Activated CD8-positive, alpha-beta memory T cell treated with anti-CD3 and anti-CD28 coated beads, Interleukin-2, amount 10 ng/mL, durations not matched to agents 7 days and 5 days (primary cell): ENCODE measurements at regions of chr2 and their contacts with region 1.

Region 1: GRCh38 chr2:174341286-174341994 is 6.7 kb downstream of the SP9 start:
- DNase-seq: peak; percentile 90
- ATAC-seq: peak; percentile 68
- H3K4me3 Mint-ChIP-seq: peak overlapping the region; percentile 59
- H3K27ac Mint-ChIP-seq: peak overlapping the region; percentile 84
- H3K4me1 Mint-ChIP-seq: peaks cover 41% of the 10 kb centered on the region
- H3K27me3 Mint-ChIP-seq: peaks cover 78% of the 10 kb centered on the region

Region 2: DNA sequence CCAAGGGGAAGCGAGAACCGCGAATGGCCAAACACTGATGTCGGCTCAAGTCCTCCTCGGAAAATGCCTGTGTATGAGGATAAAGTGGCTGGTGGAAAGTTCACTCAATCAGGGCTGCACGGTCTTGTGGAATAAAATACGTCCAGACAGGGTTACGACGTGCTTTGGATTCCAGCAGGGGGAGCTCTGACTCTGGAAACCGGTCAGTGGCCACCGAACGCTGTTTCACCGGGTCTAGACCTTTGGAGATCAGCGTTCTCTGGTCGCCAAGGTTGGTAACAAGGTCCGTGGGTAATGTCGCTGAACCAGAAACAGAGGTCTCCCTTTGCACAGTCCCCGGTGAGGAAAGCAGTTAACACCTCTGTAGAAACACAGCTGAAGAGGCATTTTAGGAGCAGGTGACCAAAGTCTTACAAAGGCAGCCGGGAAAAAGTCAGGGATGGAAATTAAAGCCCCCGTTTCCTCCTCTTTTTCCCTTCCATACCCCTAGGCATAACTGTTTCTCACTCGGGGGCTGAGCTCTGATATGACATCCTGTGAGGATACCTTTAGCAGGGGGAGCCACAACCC is 939.0 kb before region 1 on chr2:
- CTCF ChIA-PET with region 1: interaction called, 13 read pairs
- DNase-seq: peak; percentile 82
- ATAC-seq: peak; percentile 89
- H3K4me3 Mint-ChIP-seq: no peak overlapping the region
- H3K27ac Mint-ChIP-seq: no peak overlapping the region
- H3K4me1 Mint-ChIP-seq: peaks cover 8% of the 10 kb centered on the region
- H3K27me3 Mint-ChIP-seq: peaks cover 66% of the 10 kb centered on the region

Region 3: GRCh38 chr2:174158003-174158402 is 183.4 kb before region 1 on chr2:
- CTCF ChIA-PET with region 1: interaction called, 18 read pairs
- DNase-seq: peak; percentile 45
- ATAC-seq: peak; percentile 47
- H3K4me3 Mint-ChIP-seq: no peak overlapping the region
- H3K27ac Mint-ChIP-seq: no peak overlapping the region
- H3K4me1 Mint-ChIP-seq: peaks cover 3% of the 10 kb centered on the region
- H3K27me3 Mint-ChIP-seq: no peaks in the 10 kb centered on the region

Region 4: DNA sequence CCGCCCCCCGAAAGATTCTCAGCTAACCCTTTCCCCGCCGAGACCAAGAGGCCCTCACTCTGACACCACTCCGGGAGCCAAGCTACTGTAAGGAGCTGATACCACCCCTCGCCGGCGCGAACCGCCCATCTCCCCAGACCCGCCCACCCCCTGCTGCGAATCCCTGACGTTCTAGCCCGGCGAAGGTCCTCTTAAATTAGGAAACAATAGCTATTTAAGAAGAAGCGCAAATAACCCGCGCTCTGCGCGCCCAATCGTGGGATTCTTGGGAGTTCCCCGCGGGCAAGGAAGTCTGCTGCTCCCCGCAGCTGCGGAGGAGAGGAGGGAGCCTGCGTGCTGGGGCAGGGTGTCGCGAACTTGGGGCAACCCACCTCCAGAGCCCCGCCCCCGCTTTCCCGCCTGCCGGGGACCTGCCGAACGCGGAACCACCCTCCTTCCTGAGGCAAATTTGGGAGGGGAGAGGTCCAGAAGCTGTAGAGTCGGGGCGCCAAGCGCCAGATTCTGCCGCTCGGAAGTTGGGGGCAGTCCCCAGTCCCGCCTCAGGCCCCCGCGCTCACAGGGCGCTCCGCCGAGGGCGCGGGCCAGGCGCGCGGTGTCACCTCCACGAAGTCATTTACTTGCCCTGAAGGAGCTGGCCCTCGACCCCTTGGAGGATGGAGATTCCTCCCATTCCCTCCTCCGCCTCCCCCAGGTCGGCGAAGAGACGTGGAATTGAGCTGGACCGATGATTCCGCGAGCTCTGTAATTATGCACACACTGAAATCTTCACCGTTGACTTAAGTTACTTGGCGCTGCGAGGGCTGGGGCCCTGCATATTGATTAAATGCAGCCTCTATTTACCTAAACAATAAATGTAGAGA is 15.0 kb before region 1 on chr2:
- CTCF ChIA-PET with region 1: interaction called, 27 read pairs
- DNase-seq: peak; percentile 42
- ATAC-seq: peak; percentile 53
- H3K4me3 Mint-ChIP-seq: peak overlapping the region; percentile 55
- H3K27ac Mint-ChIP-seq: no peak overlapping the region
- H3K4me1 Mint-ChIP-seq: peaks cover 22% of the 10 kb centered on the region
- H3K27me3 Mint-ChIP-seq: peaks cover 92% of the 10 kb centered on the region

Region 5: GRCh38 chr2:174465327-174465726 is 123.9 kb after region 1 on chr2:
- CTCF ChIA-PET with region 1: no interaction called
- DNase-seq: no peak
- ATAC-seq: no peak
- H3K4me3 Mint-ChIP-seq: no peak overlapping the region
- H3K27ac Mint-ChIP-seq: no peak overlapping the region
- H3K4me1 Mint-ChIP-seq: no peaks in the 10 kb centered on the region
- H3K27me3 Mint-ChIP-seq: no peaks in the 10 kb centered on the region